ENCODE measurements at regions of chr14 and their contacts with region 1.

Region 1: GRCh38 chr14:100239840-100240724 is 1.1 kb downstream of the YY1 start:
- DNase-seq: peak; percentile 83 to 92 (median 90)
- H3K4me3 ChIP-seq: peak overlapping the region; percentile 86 to 100 (median 96)
- H3K27ac ChIP-seq: peak overlapping the region; percentile 58 to 98
- H3K4me1 ChIP-seq: peaks cover 25 to 48% (median 38%) of the 10 kb centered on the region in 4 experiments
- H3K27me3 ChIP-seq: no peaks in the 10 kb centered on the region

Region 2: GRCh38 chr14:100015251-100015655 is 224.8 kb before region 1 on chr14:
- CTCF ChIA-PET with region 1: no interaction called
- POLR2A ChIA-PET with region 1: no interaction called
- DNase-seq: peak in 2 of 3 donors; percentile 43 to 53
- H3K4me3 ChIP-seq: no peak overlapping the region
- H3K27ac ChIP-seq: no peak overlapping the region
- H3K4me1 ChIP-seq: peaks cover 0 to 27% (median 9%) of the 10 kb centered on the region in 4 experiments
- H3K27me3 ChIP-seq: no peaks in the 10 kb centered on the region

Region 3: GRCh38 chr14:100122481-100123222 is 117.4 kb before region 1 on chr14:
- CTCF ChIA-PET with region 1: no interaction called
- POLR2A ChIA-PET with region 1: no interaction called
- DNase-seq: peak in 2 of 3 donors; percentile 30 to 35
- H3K4me3 ChIP-seq: no peak overlapping the region
- H3K27ac ChIP-seq: no peak overlapping the region
- H3K4me1 ChIP-seq: peaks cover 0 to 7% (median 2%) of the 10 kb centered on the region in 4 experiments
- H3K27me3 ChIP-seq: no peaks in the 10 kb centered on the region

Region 4: DNA sequence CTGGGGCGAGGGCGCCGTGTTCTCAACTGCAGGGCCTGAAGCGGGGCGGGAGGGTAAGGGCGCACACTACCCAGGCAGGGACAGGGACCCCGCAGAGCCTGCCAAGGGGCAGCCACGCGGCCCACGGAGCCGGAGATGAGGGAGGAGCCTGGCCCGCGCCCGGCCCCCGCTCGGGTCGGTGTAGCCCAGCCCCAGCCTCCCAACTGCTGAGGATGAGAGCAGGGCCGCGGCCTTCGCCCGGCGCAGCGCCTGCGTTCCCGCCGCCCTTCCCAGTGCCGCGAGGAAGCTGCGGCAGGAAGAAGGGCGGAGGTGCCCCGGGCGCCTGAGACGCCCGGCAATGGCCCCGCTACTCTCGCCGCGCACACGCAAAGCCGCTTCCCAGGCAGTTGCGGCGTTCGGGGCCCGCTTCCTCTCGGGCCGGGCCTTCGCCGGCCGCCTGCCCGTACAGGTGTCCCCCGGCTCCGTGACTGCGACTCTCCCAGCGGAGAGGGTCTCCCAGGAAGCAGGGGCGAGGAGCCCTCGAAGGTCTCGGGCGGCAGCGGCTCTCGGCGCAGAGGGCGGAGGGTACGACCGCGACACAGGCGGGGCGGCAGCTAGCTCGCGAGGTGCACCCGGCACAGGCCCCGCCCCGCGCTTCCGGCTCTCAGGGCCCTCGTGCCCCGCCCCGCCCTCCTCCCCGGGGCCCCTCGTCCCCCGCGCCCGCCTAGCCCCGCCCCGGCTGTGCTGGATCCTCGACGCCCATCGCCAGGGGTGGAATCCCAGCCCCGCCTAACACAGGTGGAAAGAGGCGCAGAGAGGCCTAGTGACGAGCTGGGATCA is 25.9 kb before region 1 on chr14:
- CTCF ChIA-PET with region 1: interaction called, 25 read pairs
- POLR2A ChIA-PET with region 1: interaction called, 3 read pairs
- DNase-seq: peak; percentile 86 to 94 (median 93)
- H3K4me3 ChIP-seq: peak overlapping the region; percentile 57 to 87 (median 76)
- H3K27ac ChIP-seq: peak overlapping the region; percentile 78 to 87
- H3K4me1 ChIP-seq: peaks cover 5 to 25% (median 21%) of the 10 kb centered on the region in 4 experiments
- H3K27me3 ChIP-seq: no peaks in the 10 kb centered on the region

Region 5: DNA sequence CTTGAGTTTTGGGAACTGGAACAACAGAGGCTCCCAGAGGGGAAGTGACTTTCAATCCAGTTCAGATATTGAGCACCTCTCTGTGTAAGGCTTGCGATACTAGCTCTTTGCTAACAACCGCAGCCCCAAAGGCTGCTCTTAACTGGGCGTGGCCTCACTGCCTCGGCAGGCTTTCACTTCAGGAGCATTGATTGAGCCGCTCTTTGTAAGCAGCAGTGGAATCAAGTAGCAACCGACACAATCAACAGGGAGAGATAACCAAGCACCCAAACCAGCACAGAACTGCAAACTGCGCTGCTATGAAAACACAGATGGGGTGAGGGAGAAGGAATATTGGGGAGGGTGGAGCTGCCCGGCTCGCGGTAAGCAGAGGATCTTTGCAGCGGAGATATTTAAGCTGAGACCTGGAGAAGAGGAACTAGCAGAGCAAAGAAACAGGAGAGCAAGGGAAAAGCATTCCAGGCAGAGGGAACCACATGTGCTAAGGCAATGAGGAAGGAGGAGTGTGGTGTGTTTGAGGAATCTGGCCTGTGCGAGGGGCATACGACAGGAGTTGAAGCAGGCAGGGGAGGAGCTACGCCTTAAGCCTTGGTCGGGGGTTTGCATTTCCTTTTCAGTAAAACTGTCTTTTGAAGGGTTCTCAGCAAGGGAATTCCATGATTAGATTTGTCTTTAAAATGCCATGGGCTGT is 18.4 kb before region 1 on chr14:
- CTCF ChIA-PET with region 1: interaction called, 86 read pairs
- POLR2A ChIA-PET with region 1: interaction called, 9 read pairs
- DNase-seq: peak; percentile 52 to 82 (median 76)
- H3K4me3 ChIP-seq: peak overlapping the region; percentile 48 to 87 (median 70)
- H3K27ac ChIP-seq: peak overlapping the region in 1 of 2 experiments; percentile 68
- H3K4me1 ChIP-seq: peaks cover 24 to 46% (median 43%) of the 10 kb centered on the region in 4 experiments
- H3K27me3 ChIP-seq: no peaks in the 10 kb centered on the region

Region 6: DNA sequence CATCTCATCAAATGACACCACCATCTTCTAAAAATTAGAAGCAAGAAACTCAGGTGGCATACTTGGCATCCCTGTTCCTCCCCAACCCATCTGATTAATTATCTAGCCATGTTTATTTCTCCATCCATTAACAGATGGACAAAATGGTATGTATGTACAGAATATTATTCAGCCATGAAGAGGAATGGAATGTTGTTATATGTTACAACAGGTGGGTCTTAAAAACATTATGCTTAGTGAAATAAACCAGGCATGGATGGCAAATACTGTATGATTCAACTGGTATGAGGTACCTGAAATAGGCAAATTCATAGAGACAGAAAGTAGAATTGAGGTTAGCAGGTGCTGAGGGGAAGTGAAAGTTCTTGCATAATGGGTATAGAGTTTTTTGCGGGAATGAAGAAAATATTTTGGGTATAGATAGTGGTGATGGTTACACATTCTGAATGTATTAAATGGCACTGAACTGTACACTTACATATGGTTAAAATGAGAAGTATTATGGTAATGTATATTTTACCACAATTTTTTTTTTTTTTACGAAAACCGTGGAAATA is 16.3 kb after region 1 on chr14:
- CTCF ChIA-PET with region 1: interaction called, 19 read pairs
- POLR2A ChIA-PET with region 1: no interaction called
- DNase-seq: no peak
- H3K4me3 ChIP-seq: no peak overlapping the region
- H3K27ac ChIP-seq: no peak overlapping the region
- H3K4me1 ChIP-seq: peaks cover under 1 to 3% (median 3%) of the 10 kb centered on the region in 4 experiments
- H3K27me3 ChIP-seq: no peaks in the 10 kb centered on the region

Region 7: GRCh38 chr14:100263144-100263543 is 23.1 kb after region 1 on chr14:
- CTCF ChIA-PET with region 1: interaction called, 19 read pairs
- POLR2A ChIA-PET with region 1: no interaction called
- DNase-seq: no peak
- H3K4me3 ChIP-seq: no peak overlapping the region
- H3K27ac ChIP-seq: no peak overlapping the region
- H3K4me1 ChIP-seq: peaks cover 0 to 1% (median 0%) of the 10 kb centered on the region in 4 experiments
- H3K27me3 ChIP-seq: no peaks in the 10 kb centered on the region

Region 8: DNA sequence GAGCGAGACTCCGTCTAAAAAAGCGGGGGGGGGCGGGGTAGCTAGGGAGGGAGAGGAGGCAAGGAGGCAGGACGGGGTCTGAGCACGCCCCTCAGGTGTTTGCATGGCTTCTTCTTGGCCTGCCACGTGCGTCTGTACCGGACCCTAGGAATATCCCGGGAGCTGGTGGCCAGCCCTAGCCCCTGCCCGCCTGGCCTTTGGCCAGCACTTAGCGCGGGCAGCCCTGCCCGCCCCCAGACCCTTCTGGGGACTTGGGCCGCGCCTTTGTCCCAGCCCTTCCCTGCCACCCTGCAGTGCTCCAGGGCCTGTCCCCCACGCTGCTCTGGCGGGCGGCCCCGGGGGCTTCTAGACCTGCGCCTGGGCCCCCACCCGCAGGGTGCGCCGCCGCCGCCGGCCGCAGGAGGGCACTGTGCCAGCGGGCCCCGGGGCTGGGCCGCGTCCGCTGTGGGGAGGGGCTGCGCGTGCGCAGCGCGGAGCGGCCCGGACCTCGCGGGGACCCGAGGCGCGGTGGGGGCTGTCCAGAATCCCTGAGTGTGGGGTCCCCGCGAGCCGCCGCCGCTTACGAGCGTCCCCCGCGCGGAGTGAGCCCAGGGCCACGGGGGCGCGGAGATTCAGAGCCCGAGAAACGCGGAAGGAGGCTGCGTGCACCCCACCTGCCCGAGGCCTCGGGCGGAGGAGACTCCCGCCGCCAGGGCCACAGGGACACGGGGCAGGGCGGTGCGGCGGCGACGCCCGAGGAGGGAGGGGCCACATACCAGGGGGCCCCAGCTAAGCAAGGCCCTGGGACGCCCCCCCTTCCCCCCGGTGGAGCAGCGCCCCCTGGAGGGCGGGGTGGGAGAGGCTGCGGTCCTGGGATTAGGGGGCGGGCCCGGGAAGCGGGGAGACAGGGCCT is 45.2 kb after region 1 on chr14:
- CTCF ChIA-PET with region 1: interaction called, 15 read pairs
- POLR2A ChIA-PET with region 1: no interaction called
- DNase-seq: peak; percentile 74 to 87 (median 85)
- H3K4me3 ChIP-seq: peak overlapping the region; percentile 56 to 84 (median 71)
- H3K27ac ChIP-seq: peak overlapping the region; percentile 50 to 82
- H3K4me1 ChIP-seq: peaks cover 0 to 13% (median 11%) of the 10 kb centered on the region in 4 experiments
- H3K27me3 ChIP-seq: no peaks in the 10 kb centered on the region

Region 9: GRCh38 chr14:100567009-100567876 is 327.2 kb after region 1 on chr14:
- CTCF ChIA-PET with region 1: no interaction called
- POLR2A ChIA-PET with region 1: no interaction called
- DNase-seq: peak in 2 of 3 donors; percentile 44 to 55
- H3K4me3 ChIP-seq: peak overlapping the region in 6 of 7 experiments; percentile 15 to 66 (median 50)
- H3K27ac ChIP-seq: no peak overlapping the region
- H3K4me1 ChIP-seq: peaks cover 0 to 26% (median 21%) of the 10 kb centered on the region in 4 experiments
- H3K27me3 ChIP-seq: peaks cover 0 to 62% (median 25%) of the 10 kb centered on the region in 5 experiments

Region 10: GRCh38 chr14:100586403-100587085 is 346.5 kb after region 1 on chr14:
- CTCF ChIA-PET with region 1: no interaction called
- POLR2A ChIA-PET with region 1: no interaction called
- DNase-seq: peak in 1 of 3 donors; percentile 22
- H3K4me3 ChIP-seq: peak overlapping the region in 6 of 7 experiments; percentile 9 to 68 (median 56)
- H3K27ac ChIP-seq: no peak overlapping the region
- H3K4me1 ChIP-seq: peaks cover 0 to 13% (median 9%) of the 10 kb centered on the region in 4 experiments
- H3K27me3 ChIP-seq: peaks cover 2 to 44% (median 28%) of the 10 kb centered on the region in 5 experiments